Panc1 (cell line): ENCODE measurements at regions of chr16 and their contacts with region 1.

Region 1: DNA sequence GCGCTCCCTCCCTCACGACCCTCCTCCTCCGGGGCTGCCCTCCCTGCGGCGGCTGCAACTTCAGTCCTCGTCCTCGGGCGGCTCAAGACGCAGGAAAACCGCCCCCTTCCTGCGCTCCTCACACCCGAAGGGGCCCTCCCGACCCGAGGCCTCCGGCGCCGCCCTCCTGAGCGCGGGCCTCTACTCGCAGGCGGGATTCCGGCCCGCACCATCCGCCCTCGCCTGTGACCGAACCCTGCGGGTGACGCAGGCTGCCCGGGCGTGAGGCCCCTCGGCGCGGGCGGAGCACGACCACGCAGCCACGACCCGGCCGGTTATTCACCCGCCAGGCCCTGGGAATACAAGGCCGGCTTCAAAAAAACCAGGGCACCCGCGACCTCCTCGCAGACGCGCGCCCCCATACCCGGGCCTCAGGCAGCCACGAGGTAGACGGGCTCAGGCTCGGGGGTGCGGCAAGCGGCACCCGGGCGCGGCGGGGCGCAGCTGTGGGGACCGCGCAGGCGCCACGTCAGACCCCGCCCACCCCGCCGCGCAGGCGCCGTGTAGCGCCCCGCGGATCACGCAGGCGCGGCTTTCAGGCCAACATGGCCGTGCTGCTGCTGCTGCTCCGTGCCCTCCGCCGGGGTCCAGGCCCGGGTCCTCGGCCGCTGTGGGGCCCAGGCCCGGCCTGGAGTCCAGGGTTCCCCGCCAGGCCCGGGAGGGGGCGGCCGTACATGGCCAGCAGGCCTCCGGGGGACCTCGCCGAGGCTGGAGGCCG is at the start of gene SPG7:
- DNase-seq: no peak
- ATAC-seq: peak; percentile 82
- H3K4me3 ChIP-seq: peak within 1 kb of the TSS; percentile 81 to 84
- H3K27ac ChIP-seq: peak within 1 kb of the TSS; percentile 95
- H3K4me1 ChIP-seq: peaks cover 28% of the 10 kb centered on the region
- H3K27me3 ChIP-seq: no peaks in the 10 kb centered on the region
- CTCF ChIP-seq: no peak
- total RNA-seq, gene SPG7: 118 TPM

Region 2: GRCh38 chr16:88882358-88883030 is 625.5 kb before region 1 on chr16:
- CTCF ChIA-PET with region 1: no interaction called
- POLR2A ChIA-PET with region 1: no interaction called
- in situ Hi-C with region 1: no loop called
- intact Hi-C with region 1: no loop called
- DNase-seq: no peak
- ATAC-seq: peak; percentile 55
- H3K4me3 ChIP-seq: no peak overlapping the region
- H3K27ac ChIP-seq: no peak overlapping the region
- H3K4me1 ChIP-seq: peaks cover under 1% of the 10 kb centered on the region
- H3K27me3 ChIP-seq: no peaks in the 10 kb centered on the region
- CTCF ChIP-seq: no peak

Region 3: DNA sequence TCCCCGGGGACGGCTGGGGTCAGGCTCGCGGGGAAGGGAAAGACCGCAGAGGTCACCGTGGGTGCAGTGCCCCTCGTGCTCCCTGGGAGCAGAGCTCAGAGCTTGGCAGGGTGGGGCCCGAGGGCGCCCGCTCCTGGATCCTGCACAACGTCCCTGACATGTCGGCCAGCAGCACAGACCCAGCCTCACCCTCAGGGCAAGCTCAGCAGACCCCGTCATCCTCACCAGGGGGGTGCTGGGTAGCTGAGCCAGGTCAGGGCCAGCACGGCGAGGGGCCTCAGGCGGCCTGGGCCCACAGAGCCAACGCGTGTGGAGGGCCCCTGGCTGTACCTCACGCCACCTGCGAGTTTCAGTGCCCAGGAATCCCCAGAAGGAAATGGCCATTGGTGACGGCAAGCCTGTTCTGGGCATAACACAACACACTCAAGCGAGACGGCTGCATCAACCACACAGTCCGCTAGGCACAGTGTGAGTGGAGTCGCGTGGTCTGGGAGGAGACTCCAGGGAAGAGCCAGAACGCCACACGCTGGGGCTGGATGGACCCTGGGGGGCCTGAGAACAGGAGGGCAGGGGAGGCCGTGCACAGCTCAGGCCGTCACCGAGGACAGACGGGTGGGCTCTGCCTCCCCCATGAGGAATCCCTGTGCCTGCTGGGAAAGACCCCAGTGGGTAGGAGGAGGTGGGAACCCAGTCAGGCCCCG is 230.2 kb before region 1 on chr16:
- CTCF ChIA-PET with region 1: no interaction called
- POLR2A ChIA-PET with region 1: no interaction called
- in situ Hi-C with region 1: no loop called
- intact Hi-C with region 1: no loop called
- DNase-seq: no peak
- ATAC-seq: 0 out of 2 replicates have a peak, but pooled peaks have one; percentile 18
- H3K4me3 ChIP-seq: no peak overlapping the region
- H3K27ac ChIP-seq: no peak overlapping the region; the same call in 1 of the 2 replicates
- H3K4me1 ChIP-seq: peaks cover 5% of the 10 kb centered on the region; the same call in 1 of the 2 replicates
- H3K27me3 ChIP-seq: no peaks in the 10 kb centered on the region
- CTCF ChIP-seq: no peak

Region 4: DNA sequence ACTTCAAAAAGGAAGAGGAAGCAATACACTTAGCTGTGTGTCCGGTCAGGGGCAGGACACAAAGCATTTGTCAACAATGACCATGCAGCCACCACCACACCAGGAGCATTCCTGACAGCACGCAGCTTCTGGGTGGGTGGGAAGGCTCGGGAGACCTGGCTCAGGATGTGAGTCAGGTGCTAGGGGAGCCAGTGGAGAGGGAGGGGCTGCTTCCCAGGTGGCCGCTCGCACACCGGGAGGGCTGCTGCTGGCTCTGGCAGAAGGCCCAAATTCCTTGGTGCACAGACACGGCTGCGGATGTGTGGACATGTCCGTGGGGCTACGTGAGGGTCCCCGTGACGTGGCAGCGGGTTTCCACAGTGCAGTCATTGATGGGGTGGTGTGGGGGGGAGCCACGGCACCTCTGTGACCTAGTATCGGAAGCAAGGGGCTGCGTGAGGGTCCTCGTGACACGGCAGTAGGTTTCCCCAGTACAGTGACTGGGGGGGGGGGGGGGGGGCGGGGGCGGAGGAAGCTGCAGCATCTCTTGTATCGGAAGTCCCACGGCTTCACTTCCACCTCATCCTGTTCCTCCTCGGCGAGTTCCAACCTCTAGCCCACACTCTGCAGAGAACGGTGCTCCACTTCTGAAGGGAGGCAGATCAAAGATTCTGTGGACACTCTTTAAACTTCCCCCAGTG is 177.7 kb before region 1 on chr16:
- CTCF ChIA-PET with region 1: interaction called, 3 read pairs
- POLR2A ChIA-PET with region 1: no interaction called
- in situ Hi-C with region 1: no loop called
- intact Hi-C with region 1: loop called (anchors 10 kb)
- DNase-seq: no peak
- ATAC-seq: peak; percentile 79
- H3K4me3 ChIP-seq: peak overlapping the region; percentile 3 to 27; a peak in 2 of 4 replicates
- H3K27ac ChIP-seq: peak overlapping the region; percentile 85
- H3K4me1 ChIP-seq: peaks cover 87% of the 10 kb centered on the region
- H3K27me3 ChIP-seq: no peaks in the 10 kb centered on the region
- CTCF ChIP-seq: no peak

Region 5: DNA sequence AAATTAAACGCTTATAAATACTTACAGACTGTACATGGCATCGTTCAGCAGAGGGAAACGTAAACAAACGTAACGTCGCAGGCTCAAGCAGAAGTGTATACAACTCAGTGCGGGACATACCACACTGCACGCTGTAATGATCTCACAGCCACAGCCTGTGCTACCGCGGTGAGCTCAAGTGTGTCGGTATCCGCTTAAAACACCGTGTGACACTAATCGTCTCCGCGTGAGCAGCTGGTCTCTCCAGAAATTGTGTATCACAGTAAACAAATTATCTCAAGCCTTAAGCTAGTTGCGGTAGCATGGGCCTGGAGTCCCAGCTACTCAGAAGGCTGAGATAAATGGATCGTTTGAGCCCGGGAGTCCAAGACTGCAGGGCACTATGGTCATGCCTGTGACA is 133.0 kb before region 1 on chr16:
- CTCF ChIA-PET with region 1: no interaction called
- POLR2A ChIA-PET with region 1: interaction called, 17 read pairs
- in situ Hi-C with region 1: no loop called
- intact Hi-C with region 1: no loop called
- DNase-seq: no peak
- ATAC-seq: peak; percentile 51
- H3K4me3 ChIP-seq: no peak overlapping the region
- H3K27ac ChIP-seq: no peak overlapping the region; the same call in 1 of the 2 replicates
- H3K4me1 ChIP-seq: peaks cover 66% of the 10 kb centered on the region
- H3K27me3 ChIP-seq: no peaks in the 10 kb centered on the region
- CTCF ChIP-seq: no peak

Region 6: DNA sequence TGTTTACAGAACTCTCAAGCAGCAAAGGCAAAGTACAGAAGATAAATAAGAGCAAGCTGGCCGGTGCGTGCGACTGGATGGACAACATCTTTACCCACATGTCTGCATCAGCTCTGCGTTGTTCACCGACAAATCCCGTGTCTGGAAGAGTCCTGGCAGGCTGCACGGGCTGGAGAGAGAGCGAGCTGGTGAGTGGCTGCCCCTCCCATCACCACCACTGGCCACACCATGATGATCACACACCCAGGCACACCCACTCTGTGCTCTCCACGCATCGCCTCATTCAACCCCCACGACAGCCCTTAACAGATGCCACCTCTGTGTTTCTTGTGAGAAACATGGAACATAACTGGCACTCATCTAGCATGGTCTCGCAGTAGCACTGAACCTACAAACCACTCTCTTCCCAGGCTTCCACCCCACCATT is 76.8 kb before region 1 on chr16:
- CTCF ChIA-PET with region 1: no interaction called
- POLR2A ChIA-PET with region 1: no interaction called
- in situ Hi-C with region 1: no loop called
- intact Hi-C with region 1: no loop called
- DNase-seq: no peak
- ATAC-seq: no peak
- H3K4me3 ChIP-seq: no peak overlapping the region
- H3K27ac ChIP-seq: no peak overlapping the region
- H3K4me1 ChIP-seq: peaks cover 19% of the 10 kb centered on the region
- H3K27me3 ChIP-seq: no peaks in the 10 kb centered on the region
- CTCF ChIP-seq: no peak